ENCODE measurements at regions of chr15 and their contacts with region 1.

Region 1: GRCh38 chr15:47987908-47988532 is 132.8 kb upstream of the SLC24A5 start:
- DNase-seq: peak in 1 of 10 donors; percentile 33

Region 2: GRCh38 chr15:47473832-47474231 is 514.2 kb before region 1 on chr15:
- intact Hi-C with region 1: loop called (anchors 5 kb)
- DNase-seq: peak in 3 of 10 donors; percentile 8 to 75 (median 73)

Region 3: GRCh38 chr15:47711654-47712053 is 276.4 kb before region 1 on chr15:
- intact Hi-C with region 1: loop called (anchors 2 kb)
- DNase-seq: no peak

Region 4: DNA sequence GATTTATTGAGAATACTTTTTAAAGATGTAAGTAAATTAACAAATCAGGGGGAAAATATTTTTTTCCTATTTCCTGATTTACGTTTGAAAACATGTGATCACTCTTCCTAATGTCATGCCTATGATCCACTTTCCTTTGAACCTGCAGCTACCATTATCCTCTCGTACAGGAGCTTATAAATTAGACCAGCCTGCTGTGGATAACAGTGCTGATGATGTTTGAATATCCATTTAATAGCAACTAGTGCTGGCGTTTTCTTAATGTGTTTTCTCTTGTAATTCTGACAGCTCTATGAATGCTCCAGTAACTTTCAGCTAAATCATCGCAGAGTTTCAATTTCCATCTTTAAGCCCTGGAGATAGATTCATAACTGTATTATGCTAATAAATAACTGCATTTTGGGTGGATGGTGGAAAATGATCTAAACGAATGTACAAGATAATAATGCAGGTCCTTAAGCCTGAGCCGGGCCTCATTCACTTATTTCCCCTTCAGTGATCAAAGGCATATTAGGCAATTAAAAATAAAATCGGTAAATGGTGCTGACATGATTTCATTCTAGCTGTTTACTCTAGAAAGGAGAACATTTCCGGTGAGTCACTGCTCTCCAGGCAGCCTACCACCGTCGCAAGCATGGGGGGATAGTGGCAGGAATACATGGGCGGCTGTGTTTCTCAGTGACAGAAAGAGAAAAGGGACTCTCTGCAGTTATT is 74.3 kb after region 1 on chr15:
- intact Hi-C with region 1: no loop called
- DNase-seq: peak in 2 of 10 donors; percentile 8 to 51

Region 5: GRCh38 chr15:48285329-48286214 is 297.6 kb after region 1 on chr15:
- intact Hi-C with region 1: loop called (anchors 10 kb)
- DNase-seq: peak in 4 of 10 donors; percentile 18 to 38 (median 35)